HAP-1 (cell line): ENCODE measurements at regions of chr1 and their contacts with region 1.

Region 1: GRCh38 chr1:241611063-241611462 is 29.1 kb downstream of the CHML start:
- DNase-seq: peak in 1 of 2 experiments; percentile 70
- H3K4me3 ChIP-seq: no peak overlapping the region
- H3K4me1 ChIP-seq: no peaks in the 10 kb centered on the region
- H3K27me3 ChIP-seq: no peaks in the 10 kb centered on the region

Region 2: DNA sequence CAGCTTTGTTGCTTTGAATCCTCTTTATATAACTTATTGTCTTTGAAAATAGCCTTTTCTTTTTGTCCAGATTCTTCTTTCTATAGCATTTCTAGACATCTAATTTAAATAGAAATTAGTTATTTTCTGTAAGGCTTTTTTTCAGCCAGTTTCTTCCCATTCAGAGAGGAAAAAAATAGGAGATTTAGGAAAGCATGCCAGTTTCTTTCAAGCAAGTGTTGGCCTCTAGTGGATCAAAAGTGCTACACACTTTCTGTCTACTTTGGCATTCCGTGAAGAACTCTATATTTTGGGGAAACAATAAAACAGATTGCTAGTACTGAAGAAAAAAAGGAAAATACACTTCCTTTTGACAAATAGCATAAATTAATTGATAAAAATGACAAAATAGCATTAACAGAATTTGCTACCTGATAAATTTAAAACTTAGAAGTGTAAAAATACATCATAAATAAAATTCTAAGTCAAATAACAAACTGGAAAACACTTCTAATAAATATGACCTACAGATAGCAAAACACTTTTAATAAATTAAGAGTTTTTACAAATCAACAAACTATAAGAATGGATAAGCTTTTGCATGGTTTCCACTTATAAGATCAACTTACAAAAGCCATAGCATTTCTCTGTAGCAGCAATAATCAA is 223.8 kb after region 1 on chr1:
- in situ Hi-C with region 1: loop called (anchors 5 kb)
- DNase-seq: peak in 1 of 2 experiments; percentile 56
- H3K4me3 ChIP-seq: no peak overlapping the region
- H3K4me1 ChIP-seq: no peaks in the 10 kb centered on the region
- H3K27me3 ChIP-seq: peaks cover 6% of the 10 kb centered on the region

Region 3: GRCh38 chr1:241985787-241986186 is 374.7 kb after region 1 on chr1:
- in situ Hi-C with region 1: loop called (anchors 10 kb)
- DNase-seq: peak; percentile 45 to 71
- H3K4me3 ChIP-seq: no peak overlapping the region
- H3K4me1 ChIP-seq: peaks cover 5% of the 10 kb centered on the region
- H3K27me3 ChIP-seq: no peaks in the 10 kb centered on the region